RWPE1 (cell line): ENCODE measurements at regions of chr10 and their contacts with region 1.

Region 1: DNA sequence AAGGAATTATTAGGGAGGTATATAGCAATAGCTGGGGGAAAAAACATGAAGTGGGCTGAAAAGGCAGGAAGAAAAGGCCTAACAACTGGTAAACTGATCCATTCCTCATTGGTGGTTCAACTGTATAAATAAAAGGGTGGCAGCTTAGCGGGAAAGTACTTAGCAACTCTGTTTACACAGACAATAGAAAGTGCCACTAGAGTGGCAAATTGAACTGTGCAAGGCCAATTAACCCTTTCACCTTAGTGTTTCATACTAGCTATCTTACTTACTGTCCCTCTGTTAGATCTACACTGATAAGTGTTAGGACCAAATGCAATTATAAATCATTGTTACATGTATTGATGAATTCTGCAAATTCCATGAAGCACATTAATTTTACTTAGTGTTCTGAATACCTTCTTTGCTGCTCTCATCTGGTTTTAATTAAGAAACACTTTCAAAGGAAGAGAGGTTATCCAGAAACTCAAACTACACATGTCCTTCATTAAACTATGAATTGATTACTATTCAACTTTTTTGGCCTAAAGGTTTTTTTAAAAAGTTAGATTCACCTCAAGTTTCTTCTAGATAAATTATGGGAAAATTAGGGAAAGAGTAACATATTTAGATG is 28.0 kb downstream of the DNAJC1 start:
- DNase-seq: no peak
- H3K27ac ChIP-seq: no peak overlapping the region
- CTCF ChIP-seq: no peak

Region 2: GRCh38 chr10:21593986-21594385 is 381.5 kb before region 1 on chr10:
- CTCF ChIA-PET with region 1: no interaction called
- POLR2A ChIA-PET with region 1: no interaction called
- DNase-seq: no peak
- H3K27ac ChIP-seq: no peak overlapping the region
- CTCF ChIP-seq: no peak

Region 3: DNA sequence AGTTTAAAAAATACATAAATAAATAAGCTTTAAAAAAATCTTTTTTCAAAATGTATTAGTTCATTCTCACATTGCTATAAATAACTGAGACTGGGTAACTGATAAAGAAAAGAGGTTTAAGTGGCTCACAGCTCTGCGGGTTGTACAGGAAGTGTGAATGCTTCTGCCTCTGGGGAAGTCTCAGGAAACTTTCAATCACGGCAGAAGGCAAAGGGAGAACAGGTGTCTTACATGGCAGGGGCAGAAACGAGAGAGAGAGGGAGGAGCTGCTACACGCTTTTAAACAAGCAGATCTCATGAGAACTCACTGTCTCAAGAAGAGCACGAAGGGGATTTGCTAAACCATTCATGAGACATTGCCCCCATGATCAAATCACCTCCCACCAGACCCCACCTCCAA is 86.5 kb before region 1 on chr10:
- CTCF ChIA-PET with region 1: no interaction called
- POLR2A ChIA-PET with region 1: no interaction called
- DNase-seq: no peak
- H3K27ac ChIP-seq: no peak overlapping the region
- CTCF ChIP-seq: no peak

Region 4: GRCh38 chr10:21985541-21985940 is 10.1 kb after region 1 on chr10:
- CTCF ChIA-PET with region 1: no interaction called
- POLR2A ChIA-PET with region 1: no interaction called
- DNase-seq: no peak
- H3K27ac ChIP-seq: no peak overlapping the region
- CTCF ChIP-seq: no peak

Region 5: DNA sequence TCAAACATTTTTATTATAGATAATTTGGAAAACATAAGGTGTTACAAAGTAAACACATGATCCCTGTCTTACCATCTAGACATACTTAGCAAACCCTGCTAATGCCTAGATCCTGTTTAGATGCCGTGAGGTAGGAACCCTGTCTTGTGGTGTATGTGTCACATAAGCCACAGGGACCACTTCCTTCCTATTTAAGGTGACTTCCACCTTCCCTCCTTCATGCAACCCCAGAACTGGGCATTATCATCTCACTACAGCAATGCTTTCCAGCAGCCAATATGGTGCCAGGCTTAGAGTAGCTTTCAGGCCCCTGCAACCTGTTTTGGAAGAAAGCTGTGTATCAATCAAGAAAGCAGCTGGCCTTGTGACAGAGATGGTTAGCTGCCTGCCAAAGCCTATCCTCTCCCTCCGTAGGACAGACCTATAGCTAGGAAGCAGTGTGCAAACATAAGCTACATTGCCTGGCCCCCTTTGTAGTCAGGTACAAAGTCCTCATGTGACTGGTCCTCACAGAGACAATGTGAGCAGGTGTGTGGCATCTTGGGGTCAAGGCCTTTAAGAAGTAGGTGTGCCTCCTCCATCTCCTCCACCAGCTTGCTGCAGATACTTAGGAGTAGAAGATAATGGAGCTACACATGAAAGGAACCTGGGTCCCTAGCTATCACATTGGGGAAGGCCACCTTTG is 516.6 kb after region 1 on chr10:
- CTCF ChIA-PET with region 1: interaction called, 10 read pairs
- POLR2A ChIA-PET with region 1: no interaction called
- DNase-seq: no peak
- H3K27ac ChIP-seq: no peak overlapping the region
- CTCF ChIP-seq: no peak